WTC11 (cell line): ENCODE measurements at regions of chr16 and their contacts with region 1.

Region 1: GRCh38 chr16:58515125-58515870 is at the start of gene SETD6:
- DNase-seq: peak; percentile 84
- ATAC-seq: peak; percentile 60
- H3K4me3 Mint-ChIP-seq: peak within 1 kb of the TSS; percentile 88
- H3K27ac Mint-ChIP-seq: peak within 1 kb of the TSS; percentile 87
- H3K4me1 Mint-ChIP-seq: peaks cover 29% of the 10 kb centered on the region
- H3K27me3 Mint-ChIP-seq: no peaks in the 10 kb centered on the region
- CTCF ChIP-seq: no peak
- total RNA-seq, gene SETD6: 34.0 to 41.1 TPM (median 35.0 TPM) in 3 replicates

Region 2: GRCh38 chr16:58494981-58495520 is 20.2 kb before region 1 on chr16:
- CTCF ChIA-PET with region 1: interaction called, 24 read pairs
- POLR2A ChIA-PET with region 1: interaction called, 5 read pairs
- DNase-seq: peak; percentile 83
- ATAC-seq: peak; percentile 60
- H3K4me3 Mint-ChIP-seq: 0 out of 2 replicates have a peak overlapping the region, but pooled peaks have one; percentile 22
- H3K27ac Mint-ChIP-seq: 0 out of 2 replicates have a peak overlapping the region, but pooled peaks have one; percentile 72
- H3K4me1 Mint-ChIP-seq: peaks cover 16% of the 10 kb centered on the region
- H3K27me3 Mint-ChIP-seq: peaks cover 37% of the 10 kb centered on the region
- CTCF ChIP-seq: no peak; the same call in 1 of the 2 replicates

Region 3: GRCh38 chr16:58661199-58661830 is 146.0 kb after region 1 on chr16:
- CTCF ChIA-PET with region 1: interaction called, 20 read pairs
- POLR2A ChIA-PET with region 1: no interaction called
- DNase-seq: peak; percentile 23
- ATAC-seq: peak; percentile 95
- H3K4me3 Mint-ChIP-seq: no peak overlapping the region
- H3K27ac Mint-ChIP-seq: no peak overlapping the region
- H3K4me1 Mint-ChIP-seq: no peaks in the 10 kb centered on the region
- H3K27me3 Mint-ChIP-seq: no peaks in the 10 kb centered on the region; the same call in 1 of the 2 replicates
- CTCF ChIP-seq: 0 out of 2 replicates have a peak, but pooled peaks have one; percentile 13

Region 4: DNA sequence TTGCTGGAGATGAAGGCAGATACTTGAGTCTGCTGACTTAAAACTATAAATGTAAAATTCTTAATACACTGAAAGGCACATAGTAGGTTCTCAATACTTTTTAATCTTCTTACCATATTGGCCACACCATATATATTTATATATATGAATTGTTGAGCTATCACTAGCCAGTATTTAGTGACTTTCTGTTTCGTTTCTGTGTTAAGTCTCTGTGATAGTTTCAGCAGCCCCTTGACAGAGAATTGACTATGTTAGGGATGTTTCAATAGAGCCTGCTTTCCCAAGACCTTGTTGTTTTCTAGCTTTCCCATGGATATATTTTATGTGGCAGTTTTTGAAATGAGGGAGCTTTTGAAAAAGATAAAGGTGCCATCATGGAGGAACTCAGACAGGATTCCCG is 425.3 kb after region 1 on chr16:
- CTCF ChIA-PET with region 1: no interaction called
- POLR2A ChIA-PET with region 1: no interaction called
- DNase-seq: no peak
- ATAC-seq: no peak
- H3K4me3 Mint-ChIP-seq: no peak overlapping the region
- H3K27ac Mint-ChIP-seq: no peak overlapping the region
- H3K4me1 Mint-ChIP-seq: peaks cover 25% of the 10 kb centered on the region
- H3K27me3 Mint-ChIP-seq: no peaks in the 10 kb centered on the region
- CTCF ChIP-seq: no peak